Common myeloid progenitor, CD34-positive (primary cell): ENCODE measurements at regions of chr4 and their contacts with region 1.

Region 1: GRCh38 chr4:169270810-169271691 is at the start of gene SH3RF1:
- DNase-seq: peak; percentile 83 to 91 (median 84)
- H3K4me3 ChIP-seq: peak within 1 kb of the TSS; percentile 80 to 97 (median 90)
- H3K27ac ChIP-seq: peak within 1 kb of the TSS; percentile 68 to 82
- H3K4me1 ChIP-seq: peaks cover 8 to 46% (median 28%) of the 10 kb centered on the region in 4 experiments
- H3K27me3 ChIP-seq: no peaks in the 10 kb centered on the region

Region 2: DNA sequence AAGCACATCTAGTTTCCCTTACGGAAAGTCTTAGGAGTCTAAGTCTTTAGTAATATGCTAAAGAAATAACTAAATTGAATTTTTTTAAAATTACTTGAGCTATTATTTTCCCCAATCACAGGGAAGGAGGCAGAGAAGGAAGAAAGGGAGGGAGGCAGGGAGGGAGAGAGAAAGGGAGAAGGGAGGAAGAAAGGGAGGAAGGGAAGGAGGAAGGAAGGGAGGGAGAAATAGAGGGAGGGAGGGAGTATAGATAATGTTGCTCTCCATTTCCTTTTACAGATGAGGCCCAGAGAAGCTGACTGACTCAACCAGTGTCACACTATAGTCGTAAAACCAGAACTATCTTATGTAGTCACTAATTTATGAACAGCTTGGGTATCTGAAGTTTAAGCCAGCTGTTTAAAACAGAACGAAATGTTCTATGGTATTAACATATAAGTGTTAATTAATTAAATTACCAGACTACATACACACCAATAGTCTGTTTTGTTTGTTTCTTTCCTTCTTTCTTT is 14.9 kb before region 1 on chr4:
- CTCF ChIA-PET with region 1: interaction called, 18 read pairs
- POLR2A ChIA-PET with region 1: no interaction called
- DNase-seq: no peak
- H3K4me3 ChIP-seq: no peak overlapping the region
- H3K27ac ChIP-seq: no peak overlapping the region
- H3K4me1 ChIP-seq: peaks cover 21 to 69% (median 48%) of the 10 kb centered on the region in 4 experiments
- H3K27me3 ChIP-seq: no peaks in the 10 kb centered on the region

Region 3: GRCh38 chr4:169282429-169283113 is 11.5 kb after region 1 on chr4:
- CTCF ChIA-PET with region 1: interaction called, 10 read pairs
- POLR2A ChIA-PET with region 1: no interaction called
- DNase-seq: no peak
- H3K4me3 ChIP-seq: no peak overlapping the region
- H3K27ac ChIP-seq: no peak overlapping the region
- H3K4me1 ChIP-seq: peaks cover 0 to 1% (median 0%) of the 10 kb centered on the region in 4 experiments
- H3K27me3 ChIP-seq: no peaks in the 10 kb centered on the region

Region 4: DNA sequence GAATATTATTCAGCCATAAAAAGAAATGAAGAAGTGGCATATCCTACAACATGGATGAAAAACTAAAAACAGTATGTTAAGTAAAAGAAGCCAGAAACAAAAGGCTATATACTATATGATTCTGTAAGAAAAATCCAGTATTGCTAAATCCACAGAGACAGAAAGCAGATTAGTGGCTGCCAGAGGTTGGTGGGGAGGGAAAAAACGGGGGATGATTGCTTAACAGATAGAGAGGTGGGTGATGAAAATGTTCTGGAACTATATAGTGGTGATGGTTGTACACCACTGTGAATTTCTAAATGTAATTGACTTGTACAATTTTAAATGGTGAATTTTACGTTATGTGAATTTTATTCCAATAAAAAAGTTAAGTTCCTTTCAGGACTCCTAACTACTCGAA is 157.3 kb after region 1 on chr4:
- CTCF ChIA-PET with region 1: no interaction called
- POLR2A ChIA-PET with region 1: no interaction called
- DNase-seq: no peak
- H3K4me3 ChIP-seq: no peak overlapping the region
- H3K27ac ChIP-seq: no peak overlapping the region
- H3K4me1 ChIP-seq: no peaks in the 10 kb centered on the region
- H3K27me3 ChIP-seq: no peaks in the 10 kb centered on the region